ENCODE measurements at regions of chr17 and their contacts with region 1.

Region 1: DNA sequence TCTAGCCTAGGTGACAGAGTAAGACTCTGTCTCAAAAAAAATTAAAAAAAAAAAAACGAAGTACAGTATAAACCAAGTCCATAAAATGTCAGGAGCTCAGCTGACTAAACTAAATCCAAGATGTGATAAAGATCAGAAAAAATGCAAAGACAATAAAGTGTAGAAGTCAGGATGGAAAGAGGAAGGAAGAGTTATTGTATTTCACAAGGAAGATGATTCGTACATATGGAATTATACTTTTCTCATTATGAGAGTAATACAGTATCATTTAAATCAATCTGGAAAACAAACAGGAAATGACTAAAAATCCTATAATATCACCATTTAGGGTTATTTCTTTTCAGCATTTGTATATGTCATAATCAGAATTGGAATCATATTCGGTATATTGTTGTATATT is 11.4 kb upstream of the APOH start:
- DNase-seq: no peak
- ATAC-seq: no peak
- H3K4me3 ChIP-seq: no peak overlapping the region
- H3K27ac ChIP-seq: no peak overlapping the region
- H3K4me1 ChIP-seq: no peaks in the 10 kb centered on the region
- H3K27me3 ChIP-seq: no peaks in the 10 kb centered on the region
- CTCF ChIP-seq: no peak

Region 2: GRCh38 chr17:66016231-66016630 is 224.4 kb before region 1 on chr17:
- intact Hi-C with region 1: no loop called
- DNase-seq: no peak
- ATAC-seq: no peak
- H3K4me3 ChIP-seq: no peak overlapping the region
- H3K27ac ChIP-seq: no peak overlapping the region
- H3K4me1 ChIP-seq: no peaks in the 10 kb centered on the region
- H3K27me3 ChIP-seq: no peaks in the 10 kb centered on the region
- CTCF ChIP-seq: no peak

Region 3: GRCh38 chr17:66578781-66579489 is 338.3 kb after region 1 on chr17:
- intact Hi-C with region 1: loop called in 1 of 3 experiments (anchors 10 kb)
- DNase-seq: no peak
- ATAC-seq: no peak
- H3K4me3 ChIP-seq: no peak overlapping the region
- H3K27ac ChIP-seq: no peak overlapping the region
- H3K4me1 ChIP-seq: peaks cover 0 to 13% (median 8%) of the 10 kb centered on the region in 3 donors
- H3K27me3 ChIP-seq: no peaks in the 10 kb centered on the region
- CTCF ChIP-seq: no peak